ENCODE measurements at regions of chr1 and their contacts with region 1.

Region 1: DNA sequence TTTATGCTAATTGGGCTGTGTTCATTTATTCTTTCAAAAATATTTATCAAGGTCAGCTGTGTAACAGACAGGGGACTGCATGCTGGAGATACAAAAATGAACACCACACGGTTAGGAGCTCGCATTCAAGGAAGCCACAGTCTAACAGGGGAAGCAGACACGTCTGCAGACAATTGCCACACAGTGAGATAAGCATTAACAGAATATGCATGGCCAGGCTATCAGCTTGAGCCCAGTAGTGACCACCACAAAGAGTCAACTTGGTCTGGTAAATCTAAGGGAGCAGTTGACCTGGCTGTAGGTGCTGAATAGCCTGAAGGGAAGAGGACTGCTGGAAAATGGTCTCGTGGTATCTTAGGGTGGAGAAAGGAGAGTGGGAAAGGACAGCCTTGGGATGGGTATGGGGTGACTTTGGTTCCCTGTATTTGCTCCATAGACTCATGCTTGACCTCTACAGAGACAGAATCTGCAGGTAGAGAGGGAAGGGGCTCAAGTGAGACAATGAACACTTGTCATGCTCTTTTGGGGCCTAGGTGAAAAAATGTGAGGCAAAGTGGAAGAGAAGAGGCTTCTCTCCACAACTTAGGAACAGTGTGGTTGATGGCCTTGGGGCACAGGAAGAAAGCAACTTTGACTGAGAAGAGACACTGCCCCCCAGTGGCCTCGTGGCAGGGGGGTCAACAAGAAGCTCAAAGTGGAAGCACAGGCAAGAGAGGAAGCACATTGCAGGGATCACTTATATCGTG is 7.6 kb upstream of the NPL start:
- DNase-seq: peak; percentile 24 to 40
- H3K4me3 ChIP-seq: no peak overlapping the region
- H3K27ac ChIP-seq: no peak overlapping the region
- H3K4me1 ChIP-seq: no peaks in the 10 kb centered on the region
- H3K27me3 ChIP-seq: no peaks in the 10 kb centered on the region
- CTCF ChIP-seq: peak; percentile 22 to 39 (median 33)
- POLR2A ChIP-seq: no peak

Region 2: GRCh38 chr1:182604169-182605164 is 177.5 kb before region 1 on chr1 and contains the start of gene RGS16:
- intact Hi-C with region 1: loop called (anchors 5 kb)
- DNase-seq: peak; percentile 90 to 92
- H3K4me3 ChIP-seq: peak within 1 kb of the TSS; percentile 31 to 43
- H3K27ac ChIP-seq: peak within 1 kb of the TSS; percentile 2 to 47
- H3K4me1 ChIP-seq: peaks cover 0 to 4% of the 10 kb centered on the region in 2 donors
- H3K27me3 ChIP-seq: no peaks in the 10 kb centered on the region
- CTCF ChIP-seq: peak in 1 of 4 experiments; percentile 2
- POLR2A ChIP-seq: peak; percentile 74 to 84
- total RNA-seq, gene RGS16: 1.2 to 3.9 (median 3.5) TPM in 3 of 4 donors, not detected in the other

Measured in uterus (tissue), 4 donors.